Activated B cell treated with CpG ODN at 0.5 μM for 24 hours (primary cell): ENCODE measurements at regions of chr22 and their contacts with region 1.

Region 1: GRCh38 chr22:37316875-37317371 is 34.6 kb downstream of the CYTH4 start:
- DNase-seq: peak; percentile 59
- ATAC-seq: peak; percentile 82
- H3K4me3 Mint-ChIP-seq: no peak overlapping the region
- H3K27ac Mint-ChIP-seq: no peak overlapping the region
- H3K4me1 Mint-ChIP-seq: peaks cover 26% of the 10 kb centered on the region
- H3K27me3 Mint-ChIP-seq: peaks cover 4% of the 10 kb centered on the region
- CTCF ChIP-seq: no peak

Region 2: GRCh38 chr22:37254209-37254866 is 62.6 kb before region 1 on chr22:
- CTCF ChIA-PET with region 1: no interaction called
- POLR2A ChIA-PET with region 1: no interaction called
- intact Hi-C with region 1: no loop called
- DNase-seq: no peak
- ATAC-seq: no peak
- H3K4me3 Mint-ChIP-seq: no peak overlapping the region
- H3K27ac Mint-ChIP-seq: no peak overlapping the region
- H3K4me1 Mint-ChIP-seq: peaks cover 35% of the 10 kb centered on the region
- H3K27me3 Mint-ChIP-seq: no peaks in the 10 kb centered on the region
- CTCF ChIP-seq: no peak

Region 3: GRCh38 chr22:37267135-37267587 is 49.8 kb before region 1 on chr22:
- CTCF ChIA-PET with region 1: interaction called, 9 read pairs
- POLR2A ChIA-PET with region 1: interaction called, 4 read pairs
- intact Hi-C with region 1: loop called (anchors 1 kb)
- DNase-seq: peak; percentile 80
- ATAC-seq: peak; percentile 99
- H3K4me3 Mint-ChIP-seq: peak overlapping the region; percentile 88
- H3K27ac Mint-ChIP-seq: peak overlapping the region; percentile 93
- H3K4me1 Mint-ChIP-seq: peaks cover 31% of the 10 kb centered on the region
- H3K27me3 Mint-ChIP-seq: no peaks in the 10 kb centered on the region
- CTCF ChIP-seq: peak; percentile 29

Region 4: DNA sequence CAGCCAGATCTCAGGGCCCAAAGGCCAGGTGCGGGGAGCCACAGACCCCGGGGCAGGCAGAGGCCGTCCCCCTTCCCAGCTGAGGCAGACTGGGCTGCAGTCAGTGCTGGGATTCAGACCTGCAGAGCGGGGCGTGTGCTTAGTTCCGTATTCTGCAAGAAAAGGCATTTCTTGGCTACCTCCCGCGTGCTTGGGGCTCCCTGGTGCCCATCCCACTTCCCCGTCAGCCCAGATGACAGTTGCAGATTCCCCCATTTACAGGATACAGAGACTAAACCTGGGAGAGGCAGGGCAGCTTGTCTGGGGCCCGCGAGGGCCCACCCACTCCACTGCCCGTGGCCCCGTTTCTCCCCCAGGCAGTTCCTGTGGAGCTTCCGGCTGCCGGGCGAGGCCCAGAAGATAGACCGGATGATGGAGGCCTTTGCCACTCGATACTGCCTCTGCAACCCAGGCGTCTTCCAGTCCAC is 16.3 kb before region 1 on chr22:
- CTCF ChIA-PET with region 1: interaction called, 10 read pairs
- POLR2A ChIA-PET with region 1: interaction called, 7 read pairs
- intact Hi-C with region 1: no loop called
- DNase-seq: no peak
- ATAC-seq: peak; percentile 73
- H3K4me3 Mint-ChIP-seq: peak overlapping the region; percentile 59
- H3K27ac Mint-ChIP-seq: peak overlapping the region; percentile 90
- H3K4me1 Mint-ChIP-seq: peaks cover 57% of the 10 kb centered on the region
- H3K27me3 Mint-ChIP-seq: no peaks in the 10 kb centered on the region
- CTCF ChIP-seq: no peak

Region 5: GRCh38 chr22:37428649-37429586 is 112.0 kb after region 1 on chr22:
- CTCF ChIA-PET with region 1: interaction called, 42 read pairs
- POLR2A ChIA-PET with region 1: no interaction called
- intact Hi-C with region 1: loop called (anchors 1 kb)
- DNase-seq: peak; percentile 42
- ATAC-seq: peak; percentile 64
- H3K4me3 Mint-ChIP-seq: no peak overlapping the region
- H3K27ac Mint-ChIP-seq: no peak overlapping the region
- H3K4me1 Mint-ChIP-seq: peaks cover 17% of the 10 kb centered on the region
- H3K27me3 Mint-ChIP-seq: peaks cover 76% of the 10 kb centered on the region
- CTCF ChIP-seq: no peak

Region 6: GRCh38 chr22:37498289-37498909 is 181.5 kb after region 1 on chr22:
- CTCF ChIA-PET with region 1: interaction called, 5 read pairs
- POLR2A ChIA-PET with region 1: no interaction called
- intact Hi-C with region 1: loop called (anchors 1 kb)
- DNase-seq: peak; percentile 64
- ATAC-seq: peak; percentile 100
- H3K4me3 Mint-ChIP-seq: no peak overlapping the region
- H3K27ac Mint-ChIP-seq: no peak overlapping the region
- H3K4me1 Mint-ChIP-seq: peaks cover 6% of the 10 kb centered on the region
- H3K27me3 Mint-ChIP-seq: peaks cover 26% of the 10 kb centered on the region
- CTCF ChIP-seq: no peak